ENCODE measurements at regions of chr4 and their contacts with region 1.

Region 1: DNA sequence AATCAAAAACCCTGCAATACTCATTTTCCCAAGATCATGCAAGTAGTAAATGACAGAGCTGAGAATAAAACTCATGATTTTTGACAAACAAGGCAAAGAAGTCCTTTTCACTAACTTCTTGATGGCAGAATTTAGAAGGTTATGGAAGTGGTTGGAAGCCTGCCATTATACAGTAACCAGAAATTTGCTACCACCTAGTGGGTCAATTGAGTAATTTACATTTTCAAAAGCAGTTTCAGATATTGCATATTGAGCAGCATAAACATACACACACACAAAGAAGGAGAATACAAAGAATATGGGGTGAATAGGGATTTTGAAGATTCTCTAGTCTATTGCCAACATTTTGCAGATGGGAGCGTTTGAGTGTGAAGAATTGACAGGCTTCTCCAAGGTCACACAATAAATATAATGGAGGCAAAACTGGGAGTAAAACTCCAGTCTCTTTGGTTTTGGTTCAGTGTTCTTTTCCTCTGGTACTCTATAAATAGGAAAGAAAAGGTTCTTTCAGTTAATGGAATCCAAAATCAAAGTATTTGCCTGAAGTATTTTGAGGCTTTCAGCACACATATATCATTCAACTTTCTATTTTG is 70.2 kb downstream of the GC start:
- DNase-seq: peak in 4 of 5 donors; percentile 15 to 29 (median 24)
- H3K4me3 ChIP-seq: no peak overlapping the region
- H3K4me3 Mint-ChIP-seq: no peak overlapping the region
- H3K27ac ChIP-seq: no peak overlapping the region
- H3K27ac Mint-ChIP-seq: no peak overlapping the region
- H3K4me1 ChIP-seq: no peaks in the 10 kb centered on the region
- H3K4me1 Mint-ChIP-seq: peaks cover 0 to 2% (median 0%) of the 10 kb centered on the region in 4 donors
- H3K27me3 ChIP-seq: no peaks in the 10 kb centered on the region
- H3K27me3 Mint-ChIP-seq: no peaks in the 10 kb centered on the region

Region 2: DNA sequence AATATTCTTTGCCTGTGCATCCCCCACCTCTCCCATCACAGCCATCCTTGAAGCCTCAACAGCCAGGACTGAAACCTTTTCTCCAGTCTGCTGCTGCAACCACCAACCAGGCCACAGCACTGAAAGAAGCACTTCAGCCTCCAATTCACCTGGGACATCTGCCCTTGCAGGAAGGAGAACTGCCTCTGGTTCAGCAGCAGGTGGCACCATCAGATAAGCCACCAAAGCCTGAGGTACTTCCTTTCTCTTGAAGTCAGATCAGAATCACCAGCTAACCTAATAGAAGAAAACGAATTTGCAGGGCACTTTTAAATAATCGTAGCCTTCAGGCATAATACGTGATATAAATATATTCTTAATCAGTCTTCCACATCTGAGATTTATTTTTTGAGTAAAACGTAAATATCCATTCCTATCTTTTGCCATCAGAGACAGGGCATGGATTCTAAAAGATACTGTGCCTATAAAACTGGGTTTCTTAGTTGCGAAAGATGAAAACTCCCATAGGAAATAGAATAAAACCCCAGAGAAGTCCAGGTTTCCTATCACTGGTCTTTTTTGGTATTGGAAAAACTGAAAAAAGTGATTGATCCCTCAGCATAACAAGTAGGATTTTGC is 1112.2 kb before region 1 on chr4:
- CTCF ChIA-PET with region 1: no interaction called
- POLR2A ChIA-PET with region 1: no interaction called
- intact Hi-C with region 1: loop called (anchors 1 kb)
- DNase-seq: peak; percentile 61 to 65 (median 64)
- H3K4me3 ChIP-seq: no peak overlapping the region
- H3K4me3 Mint-ChIP-seq: no peak overlapping the region
- H3K27ac ChIP-seq: no peak overlapping the region
- H3K27ac Mint-ChIP-seq: no peak overlapping the region
- H3K4me1 ChIP-seq: no peaks in the 10 kb centered on the region
- H3K4me1 Mint-ChIP-seq: no peaks in the 10 kb centered on the region
- H3K27me3 ChIP-seq: no peaks in the 10 kb centered on the region
- H3K27me3 Mint-ChIP-seq: peaks cover 2 to 6% of the 10 kb centered on the region in 2 donors

Region 3: GRCh38 chr4:71050809-71051208 is 662.9 kb before region 1 on chr4:
- CTCF ChIA-PET with region 1: interaction called, 3 read pairs
- POLR2A ChIA-PET with region 1: no interaction called
- intact Hi-C with region 1: loop called (anchors 2 kb)
- DNase-seq: peak in 1 of 5 donors; percentile 1
- H3K4me3 ChIP-seq: no peak overlapping the region
- H3K4me3 Mint-ChIP-seq: no peak overlapping the region
- H3K27ac ChIP-seq: no peak overlapping the region
- H3K27ac Mint-ChIP-seq: no peak overlapping the region
- H3K4me1 ChIP-seq: no peaks in the 10 kb centered on the region
- H3K4me1 Mint-ChIP-seq: no peaks in the 10 kb centered on the region
- H3K27me3 ChIP-seq: no peaks in the 10 kb centered on the region
- H3K27me3 Mint-ChIP-seq: no peaks in the 10 kb centered on the region

Region 4: DNA sequence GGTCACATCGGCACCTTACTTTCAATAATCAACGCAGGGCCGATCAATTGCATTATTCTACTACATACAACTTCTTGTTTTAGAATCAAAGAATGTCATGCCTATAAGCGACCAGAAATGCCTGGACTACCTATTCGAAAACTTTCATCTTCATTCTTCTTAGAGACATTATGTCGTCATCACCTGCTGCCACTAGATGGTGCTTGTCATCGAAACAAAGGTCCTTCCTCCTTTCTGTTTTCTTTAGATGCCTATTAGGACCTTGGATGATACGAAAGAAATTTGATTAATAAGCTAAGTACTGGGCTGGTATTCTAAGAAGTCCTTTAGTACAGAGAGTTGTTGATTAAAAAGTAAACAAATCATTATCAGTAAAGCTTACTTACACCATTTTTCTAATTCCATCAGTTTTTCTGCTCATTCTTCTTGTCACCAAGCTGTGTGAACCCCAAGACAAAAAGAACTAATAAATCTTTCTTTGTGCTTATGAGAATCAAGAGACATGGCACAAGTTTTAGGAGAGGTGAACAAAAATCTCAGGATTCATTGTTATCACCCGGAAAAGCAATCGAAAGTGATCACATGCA is 529.4 kb before region 1 on chr4:
- CTCF ChIA-PET with region 1: interaction called, 10 read pairs
- POLR2A ChIA-PET with region 1: no interaction called
- intact Hi-C with region 1: loop called (anchors 1 kb)
- DNase-seq: peak; percentile 36 to 55 (median 47)
- H3K4me3 ChIP-seq: no peak overlapping the region
- H3K4me3 Mint-ChIP-seq: peak overlapping the region in 1 of 8 donors; percentile 53
- H3K27ac ChIP-seq: no peak overlapping the region
- H3K27ac Mint-ChIP-seq: peak overlapping the region in 2 of 7 donors; percentile 2 to 49
- H3K4me1 ChIP-seq: peaks cover 21% of the 10 kb centered on the region
- H3K4me1 Mint-ChIP-seq: peaks cover 16 to 34% (median 23%) of the 10 kb centered on the region in 4 donors
- H3K27me3 ChIP-seq: peaks cover 13% of the 10 kb centered on the region
- H3K27me3 Mint-ChIP-seq: peaks cover 12 to 26% of the 10 kb centered on the region in 2 donors

Region 5: GRCh38 chr4:71270901-71271300 is 442.8 kb before region 1 on chr4:
- CTCF ChIA-PET with region 1: no interaction called
- POLR2A ChIA-PET with region 1: no interaction called
- intact Hi-C with region 1: loop called (anchors 1 kb)
- DNase-seq: peak in 4 of 5 donors; percentile 6 to 19 (median 14)
- H3K4me3 ChIP-seq: no peak overlapping the region
- H3K4me3 Mint-ChIP-seq: no peak overlapping the region
- H3K27ac ChIP-seq: no peak overlapping the region
- H3K27ac Mint-ChIP-seq: no peak overlapping the region
- H3K4me1 ChIP-seq: peaks cover 13% of the 10 kb centered on the region
- H3K4me1 Mint-ChIP-seq: peaks cover 9 to 19% (median 13%) of the 10 kb centered on the region in 4 donors
- H3K27me3 ChIP-seq: no peaks in the 10 kb centered on the region
- H3K27me3 Mint-ChIP-seq: no peaks in the 10 kb centered on the region

Region 6: GRCh38 chr4:71659979-71660378 is 53.7 kb before region 1 on chr4:
- CTCF ChIA-PET with region 1: no interaction called
- POLR2A ChIA-PET with region 1: no interaction called
- intact Hi-C with region 1: no loop called
- DNase-seq: no peak
- H3K4me3 ChIP-seq: no peak overlapping the region
- H3K4me3 Mint-ChIP-seq: no peak overlapping the region
- H3K27ac ChIP-seq: no peak overlapping the region
- H3K27ac Mint-ChIP-seq: no peak overlapping the region
- H3K4me1 ChIP-seq: no peaks in the 10 kb centered on the region
- H3K4me1 Mint-ChIP-seq: no peaks in the 10 kb centered on the region
- H3K27me3 ChIP-seq: no peaks in the 10 kb centered on the region
- H3K27me3 Mint-ChIP-seq: peaks cover 4 to 10% of the 10 kb centered on the region in 2 donors

Region 7: DNA sequence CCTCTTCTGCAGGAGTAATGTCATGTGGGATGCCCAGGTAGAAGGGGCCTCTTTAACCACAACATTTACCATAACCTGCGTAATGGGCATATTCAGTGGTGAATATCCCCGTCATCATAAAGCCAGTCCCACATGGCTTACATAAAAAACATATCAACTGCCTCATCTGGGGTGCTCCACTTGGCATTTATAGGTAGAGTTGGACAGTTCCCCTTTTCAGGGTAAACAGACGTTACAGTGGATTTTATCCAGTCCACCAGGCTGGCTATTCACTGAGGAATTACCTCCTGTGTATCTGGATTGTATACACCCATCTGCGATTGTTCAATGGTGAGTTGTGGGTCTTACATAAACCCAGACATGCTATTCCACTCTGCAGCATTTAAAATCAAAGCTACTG is 1615.6 kb after region 1 on chr4:
- CTCF ChIA-PET with region 1: no interaction called
- POLR2A ChIA-PET with region 1: no interaction called
- intact Hi-C with region 1: no loop called
- DNase-seq: no peak
- H3K4me3 ChIP-seq: no peak overlapping the region
- H3K4me3 Mint-ChIP-seq: no peak overlapping the region
- H3K27ac ChIP-seq: no peak overlapping the region
- H3K27ac Mint-ChIP-seq: no peak overlapping the region
- H3K4me1 ChIP-seq: no peaks in the 10 kb centered on the region
- H3K4me1 Mint-ChIP-seq: peaks cover 0 to 4% (median 0%) of the 10 kb centered on the region in 4 donors
- H3K27me3 ChIP-seq: no peaks in the 10 kb centered on the region
- H3K27me3 Mint-ChIP-seq: no peaks in the 10 kb centered on the region